ENCODE measurements at regions of chr6 and their contacts with region 1.

Region 1: DNA sequence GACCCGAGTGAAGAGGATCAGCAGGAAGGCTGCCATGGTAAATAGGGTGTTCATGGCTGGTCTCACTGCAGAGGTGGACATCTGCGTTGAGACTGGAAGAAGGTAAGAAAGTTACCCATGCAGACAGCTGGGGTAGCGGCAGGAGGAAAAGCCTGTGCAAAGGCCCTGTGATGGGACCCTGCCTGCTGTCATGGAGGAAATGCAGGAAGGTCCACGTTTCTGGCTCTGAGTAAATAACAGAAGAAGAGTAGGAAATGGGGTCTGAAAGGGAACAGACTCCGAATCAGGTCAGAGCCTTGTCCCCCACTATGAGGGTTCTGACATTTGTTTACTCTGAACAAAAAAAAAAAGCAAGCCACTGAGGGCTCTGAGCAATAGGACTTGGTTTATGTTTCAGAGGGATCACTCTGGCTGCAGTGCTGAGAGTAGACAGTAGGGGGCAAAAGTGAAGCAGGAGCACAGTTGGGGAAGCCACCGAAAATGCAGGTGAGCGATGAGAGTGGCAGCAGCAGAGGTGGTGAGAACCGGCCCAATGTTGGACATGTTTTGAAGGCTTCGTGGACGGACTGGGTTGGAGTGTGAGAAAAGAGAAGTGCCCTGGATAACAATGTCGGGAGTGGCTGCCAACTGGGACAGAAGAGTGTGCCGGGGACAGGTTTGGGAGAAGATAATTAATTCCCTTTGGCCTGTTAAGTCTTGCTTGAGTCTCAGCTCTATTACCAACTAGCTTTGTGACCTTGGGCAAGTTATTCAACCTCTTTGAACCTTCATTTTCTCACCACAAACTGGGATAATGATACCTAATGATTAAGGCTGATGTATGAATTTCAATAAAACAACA is 57.9 kb upstream of the MAP7 start:
- DNase-seq: peak; percentile 80
- ATAC-seq: peak; percentile 45
- H3K4me3 ChIP-seq: no peak overlapping the region
- H3K27ac ChIP-seq: peak overlapping the region; percentile 3; the same call in 1 of the 2 replicates
- H3K4me1 ChIP-seq: peaks cover 19% of the 10 kb centered on the region
- H3K27me3 ChIP-seq: no peaks in the 10 kb centered on the region
- CTCF ChIP-seq: peak; percentile 72
- POLR2A ChIP-seq: peak; percentile 29; the same call in 1 of the 2 replicates
- RAD21 ChIP-seq: peak; percentile 64

Region 2: GRCh38 chr6:136429264-136430065 is 178.7 kb before region 1 on chr6:
- CTCF ChIA-PET with region 1: no interaction called
- POLR2A ChIA-PET with region 1: no interaction called
- dilution Hi-C with region 1: no loop called
- in situ Hi-C with region 1: no loop called
- intact Hi-C with region 1: no loop called
- DNase-seq: no peak
- ATAC-seq: no peak
- H3K4me3 ChIP-seq: no peak overlapping the region
- H3K27ac ChIP-seq: no peak overlapping the region
- H3K4me1 ChIP-seq: no peaks in the 10 kb centered on the region
- H3K27me3 ChIP-seq: peaks cover 29% of the 10 kb centered on the region
- CTCF ChIP-seq: no peak
- POLR2A ChIP-seq: no peak
- RAD21 ChIP-seq: no peak

Region 3: GRCh38 chr6:136593748-136594490 is 14.2 kb before region 1 on chr6:
- CTCF ChIA-PET with region 1: no interaction called
- POLR2A ChIA-PET with region 1: interaction called, 7 read pairs
- dilution Hi-C with region 1: no loop called
- in situ Hi-C with region 1: no loop called
- intact Hi-C with region 1: loop called (anchors 2 kb)
- DNase-seq: peak; percentile 100
- ATAC-seq: peak; percentile 94
- H3K4me3 ChIP-seq: peak overlapping the region; percentile 0; the same call in 1 of the 2 replicates
- H3K27ac ChIP-seq: peak overlapping the region; percentile 75
- H3K4me1 ChIP-seq: peaks cover 13% of the 10 kb centered on the region
- H3K27me3 ChIP-seq: no peaks in the 10 kb centered on the region
- CTCF ChIP-seq: no peak
- POLR2A ChIP-seq: peak; percentile 79
- RAD21 ChIP-seq: no peak; the same call in 1 of the 2 replicates